Right cardiac atrium (tissue), 5 donors: ENCODE measurements at regions of chr7 and their contacts with region 1.

Region 1: GRCh38 chr7:150567169-150567568 is at the start of gene GIMAP4:
- DNase-seq: no peak
- ATAC-seq: peak; percentile 80 to 90
- H3K4me3 ChIP-seq: peak within 1 kb of the TSS; percentile 57
- H3K27ac ChIP-seq: peak within 1 kb of the TSS; percentile 93
- H3K4me1 ChIP-seq: peaks cover 3% of the 10 kb centered on the region
- H3K27me3 ChIP-seq: no peaks in the 10 kb centered on the region
- total RNA-seq, gene GIMAP4: 20.2 to 44.8 (median 24.8) TPM

Region 2: GRCh38 chr7:150448789-150449147 is 118.4 kb before region 1 on chr7:
- intact Hi-C with region 1: loop called in 1 of 4 experiments (anchors 10 kb)
- DNase-seq: peak; percentile 74 to 92 (median 88)
- ATAC-seq: peak; percentile 53 to 56
- H3K4me3 ChIP-seq: no peak overlapping the region
- H3K27ac ChIP-seq: no peak overlapping the region
- H3K4me1 ChIP-seq: peaks cover 5% of the 10 kb centered on the region
- H3K27me3 ChIP-seq: no peaks in the 10 kb centered on the region

Region 3: DNA sequence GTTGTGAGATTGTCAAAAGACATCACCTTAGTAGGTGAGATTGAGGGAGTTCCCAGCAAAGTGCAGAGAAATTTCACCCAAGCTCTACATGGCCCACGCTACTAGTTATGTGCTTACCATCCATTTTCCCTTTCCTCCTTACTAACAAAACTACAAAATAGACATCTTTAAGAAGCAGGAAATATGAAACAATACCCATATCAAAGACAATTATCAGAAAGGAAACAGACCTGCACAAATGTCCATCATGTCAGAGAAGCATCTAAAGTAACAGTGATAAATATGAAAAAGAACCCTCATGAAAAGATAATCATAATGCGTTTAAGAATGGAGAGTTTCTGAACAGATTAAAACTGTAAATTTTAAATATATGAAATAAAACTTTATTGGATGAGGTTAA is 28.2 kb after region 1 on chr7:
- intact Hi-C with region 1: no loop called
- DNase-seq: no peak
- ATAC-seq: no peak
- H3K4me3 ChIP-seq: no peak overlapping the region
- H3K27ac ChIP-seq: no peak overlapping the region
- H3K4me1 ChIP-seq: no peaks in the 10 kb centered on the region
- H3K27me3 ChIP-seq: no peaks in the 10 kb centered on the region

Region 4: DNA sequence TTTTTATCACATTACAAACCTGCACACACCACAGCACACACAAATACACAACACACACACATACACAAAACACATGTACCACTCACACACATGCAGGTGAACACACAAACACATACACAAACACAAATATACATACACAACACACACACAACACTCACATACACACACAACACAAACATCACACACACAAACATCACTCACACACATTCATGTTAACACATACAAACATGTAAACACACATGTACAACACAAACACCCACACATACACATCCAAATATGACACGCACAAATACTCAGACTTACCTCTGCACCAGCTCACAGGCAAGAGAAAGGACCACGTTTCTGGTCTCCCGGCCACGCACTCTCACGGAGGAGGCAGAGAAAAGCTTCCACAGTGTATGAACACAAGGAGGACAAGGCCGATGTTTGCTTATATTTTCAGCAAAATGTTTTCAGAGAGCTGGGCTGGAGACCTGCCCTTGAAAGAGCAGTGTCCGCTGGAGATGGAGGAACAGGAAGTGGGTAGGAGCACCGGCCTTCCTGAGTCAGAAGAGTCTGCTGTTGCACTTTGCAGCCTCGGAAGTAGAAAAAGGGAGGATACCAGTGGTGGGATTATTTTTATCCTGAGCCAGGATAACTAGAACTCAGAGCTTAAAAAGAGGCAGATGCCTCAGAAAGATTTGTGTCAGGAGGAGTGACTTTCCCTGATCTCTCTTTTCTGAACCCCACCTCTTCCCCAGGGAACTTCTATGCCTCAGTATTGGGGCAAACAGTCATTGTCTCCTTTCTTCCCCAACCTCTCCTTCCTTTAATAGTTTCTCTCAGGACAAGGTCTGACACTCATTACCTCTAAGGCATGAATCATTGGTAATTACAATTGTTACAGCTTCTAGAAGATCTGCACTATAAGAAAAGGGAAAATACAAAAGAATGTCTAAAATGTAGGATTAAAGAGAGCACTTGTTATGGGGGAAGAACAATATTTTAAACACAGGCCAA is 65.0 kb after region 1 on chr7 and contains the start of gene GIMAP6:
- intact Hi-C with region 1: no loop called
- DNase-seq: peak in 2 of 3 donors; percentile 35 to 67
- ATAC-seq: peak; percentile 56 to 76
- H3K4me3 ChIP-seq: peak within 1 kb of the TSS; percentile 55
- H3K27ac ChIP-seq: peak within 1 kb of the TSS; percentile 93
- H3K4me1 ChIP-seq: peaks cover 20% of the 10 kb centered on the region
- H3K27me3 ChIP-seq: no peaks in the 10 kb centered on the region
- total RNA-seq, gene GIMAP6: 22.1 to 29.1 (median 22.9) TPM

Region 5: GRCh38 chr7:150927956-150928344 is 360.8 kb after region 1 on chr7:
- intact Hi-C with region 1: no loop called
- DNase-seq: no peak
- ATAC-seq: no peak
- H3K4me3 ChIP-seq: no peak overlapping the region
- H3K27ac ChIP-seq: no peak overlapping the region
- H3K4me1 ChIP-seq: no peaks in the 10 kb centered on the region
- H3K27me3 ChIP-seq: no peaks in the 10 kb centered on the region